ENCODE measurements at regions of chr18 and their contacts with region 1.

Region 1: GRCh38 chr18:47901624-47902362 is 28.7 kb downstream of the SMAD2 start:
- DNase-seq: peak in 4 of 14 experiments; percentile 25 to 68 (median 64)
- ATAC-seq: peak; percentile 95
- H3K4me3 ChIP-seq: peak overlapping the region; percentile 10
- H3K4me3 Mint-ChIP-seq: peak overlapping the region; percentile 76
- H3K27ac ChIP-seq: peak overlapping the region in 1 of 2 donors; percentile 62
- H3K27ac Mint-ChIP-seq: peak overlapping the region; percentile 87
- H3K4me1 ChIP-seq: peaks cover 17% of the 10 kb centered on the region
- H3K4me1 Mint-ChIP-seq: peaks cover 92% of the 10 kb centered on the region
- H3K27me3 ChIP-seq: no peaks in the 10 kb centered on the region
- H3K27me3 Mint-ChIP-seq: no peaks in the 10 kb centered on the region
- CTCF ChIP-seq: no peak

Region 2: DNA sequence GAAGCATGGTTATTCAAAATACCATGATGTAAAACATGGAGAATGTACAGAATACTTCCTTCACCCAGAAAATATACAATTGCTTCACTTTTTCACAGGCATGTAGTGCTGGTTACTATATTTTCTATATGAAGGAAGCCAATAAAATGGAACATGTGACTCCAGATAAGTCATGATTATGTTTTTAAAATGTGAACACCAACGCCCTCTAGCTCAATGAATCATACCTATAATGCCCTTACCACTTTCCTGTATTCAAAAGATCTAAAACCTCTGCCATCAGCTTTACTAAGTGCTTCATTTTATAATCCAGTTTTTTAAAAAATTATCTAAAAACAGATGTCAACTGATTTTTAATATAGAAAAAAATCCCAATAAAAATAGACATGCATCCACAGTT is 31.2 kb before region 1 on chr18:
- CTCF ChIA-PET with region 1: no interaction called
- POLR2A ChIA-PET with region 1: interaction called, 3 read pairs
- intact Hi-C with region 1: loop called in 1 of 2 experiments (anchors 5 kb)
- DNase-seq: peak in 1 of 14 experiments; percentile 10
- ATAC-seq: peak; percentile 44
- H3K4me3 ChIP-seq: no peak overlapping the region
- H3K4me3 Mint-ChIP-seq: no peak overlapping the region
- H3K27ac ChIP-seq: no peak overlapping the region
- H3K27ac Mint-ChIP-seq: peak overlapping the region; percentile 62
- H3K4me1 ChIP-seq: peaks cover 3% of the 10 kb centered on the region
- H3K4me1 Mint-ChIP-seq: peaks cover 43% of the 10 kb centered on the region
- H3K27me3 ChIP-seq: no peaks in the 10 kb centered on the region
- H3K27me3 Mint-ChIP-seq: no peaks in the 10 kb centered on the region
- CTCF ChIP-seq: no peak

Region 3: GRCh38 chr18:47912343-47912742 is 10.6 kb after region 1 on chr18:
- CTCF ChIA-PET with region 1: interaction called, 3 read pairs
- POLR2A ChIA-PET with region 1: interaction called, 13 read pairs
- intact Hi-C with region 1: no loop called
- DNase-seq: no peak
- ATAC-seq: peak; percentile 39
- H3K4me3 ChIP-seq: no peak overlapping the region
- H3K4me3 Mint-ChIP-seq: peak overlapping the region; percentile 6
- H3K27ac ChIP-seq: peak overlapping the region in 1 of 2 donors; percentile 53
- H3K27ac Mint-ChIP-seq: peak overlapping the region; percentile 66
- H3K4me1 ChIP-seq: peaks cover 31% of the 10 kb centered on the region
- H3K4me1 Mint-ChIP-seq: peaks cover 91% of the 10 kb centered on the region
- H3K27me3 ChIP-seq: no peaks in the 10 kb centered on the region
- H3K27me3 Mint-ChIP-seq: no peaks in the 10 kb centered on the region
- CTCF ChIP-seq: no peak

Measured in CD4-positive, alpha-beta T cell (primary cell).